Mammary epithelial cell (primary cell): ENCODE measurements at regions of chr1 and their contacts with region 1.

Region 1: GRCh38 chr1:43587594-43587993 is 56.9 kb downstream of the PTPRF start:
- DNase-seq: peak; percentile 66
- H3K4me3 ChIP-seq: no peak overlapping the region
- H3K27ac ChIP-seq: no peak overlapping the region
- H3K4me1 ChIP-seq: peaks cover 38% of the 10 kb centered on the region
- H3K27me3 ChIP-seq: no peaks in the 10 kb centered on the region
- CTCF ChIP-seq: no peak

Region 2: GRCh38 chr1:43137445-43138052 is 450.0 kb before region 1 on chr1:
- CTCF ChIA-PET with region 1: no interaction called
- dilution Hi-C with region 1: no loop called
- in situ Hi-C with region 1: no loop called
- intact Hi-C with region 1: no loop called
- DNase-seq: no peak
- H3K4me3 ChIP-seq: no peak overlapping the region
- H3K27ac ChIP-seq: no peak overlapping the region
- H3K4me1 ChIP-seq: peaks cover 23% of the 10 kb centered on the region
- H3K27me3 ChIP-seq: no peaks in the 10 kb centered on the region
- CTCF ChIP-seq: no peak

Region 3: DNA sequence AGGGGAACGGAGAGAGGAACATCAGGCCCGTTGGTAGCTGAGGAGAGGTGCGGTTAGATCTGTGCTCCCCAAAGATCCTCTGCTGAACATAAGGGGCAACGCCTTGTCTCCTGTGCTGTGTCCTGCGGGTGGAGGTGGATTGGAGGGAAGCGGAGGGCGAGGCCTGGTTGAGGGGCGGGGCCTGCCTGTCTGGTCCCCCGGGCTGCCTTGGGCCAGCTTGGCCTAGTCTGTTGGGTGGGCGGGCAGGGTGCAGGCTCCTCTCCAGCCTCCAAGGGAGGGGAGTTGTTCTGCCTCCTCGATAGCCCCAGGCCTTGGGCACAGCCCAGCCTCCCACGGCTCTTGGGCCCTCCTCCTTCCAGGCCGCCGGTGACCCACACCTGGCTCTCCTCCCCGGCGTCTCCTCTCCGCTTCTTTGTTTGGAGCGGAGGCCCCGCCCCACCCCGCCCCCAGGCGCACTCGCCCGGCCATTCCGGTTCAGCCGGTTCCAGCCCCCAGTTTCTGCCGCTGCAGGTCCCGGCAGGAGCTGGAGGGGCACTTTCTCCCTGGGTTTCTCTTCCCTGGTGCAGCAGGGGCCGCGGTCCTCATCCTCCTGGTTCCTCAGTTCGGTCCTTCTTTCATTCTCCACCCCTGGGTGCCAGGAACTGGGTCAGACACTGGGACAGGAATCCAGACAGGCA is 37.5 kb before region 1 on chr1:
- CTCF ChIA-PET with region 1: no interaction called
- dilution Hi-C with region 1: no loop called
- in situ Hi-C with region 1: no loop called
- intact Hi-C with region 1: loop called (anchors 1 kb)
- DNase-seq: peak; percentile 96
- H3K4me3 ChIP-seq: peak overlapping the region; percentile 44 to 55 (median 44)
- H3K27ac ChIP-seq: peak overlapping the region; percentile 92
- H3K4me1 ChIP-seq: peaks cover 53% of the 10 kb centered on the region
- H3K27me3 ChIP-seq: no peaks in the 10 kb centered on the region
- CTCF ChIP-seq: no peak

Region 4: DNA sequence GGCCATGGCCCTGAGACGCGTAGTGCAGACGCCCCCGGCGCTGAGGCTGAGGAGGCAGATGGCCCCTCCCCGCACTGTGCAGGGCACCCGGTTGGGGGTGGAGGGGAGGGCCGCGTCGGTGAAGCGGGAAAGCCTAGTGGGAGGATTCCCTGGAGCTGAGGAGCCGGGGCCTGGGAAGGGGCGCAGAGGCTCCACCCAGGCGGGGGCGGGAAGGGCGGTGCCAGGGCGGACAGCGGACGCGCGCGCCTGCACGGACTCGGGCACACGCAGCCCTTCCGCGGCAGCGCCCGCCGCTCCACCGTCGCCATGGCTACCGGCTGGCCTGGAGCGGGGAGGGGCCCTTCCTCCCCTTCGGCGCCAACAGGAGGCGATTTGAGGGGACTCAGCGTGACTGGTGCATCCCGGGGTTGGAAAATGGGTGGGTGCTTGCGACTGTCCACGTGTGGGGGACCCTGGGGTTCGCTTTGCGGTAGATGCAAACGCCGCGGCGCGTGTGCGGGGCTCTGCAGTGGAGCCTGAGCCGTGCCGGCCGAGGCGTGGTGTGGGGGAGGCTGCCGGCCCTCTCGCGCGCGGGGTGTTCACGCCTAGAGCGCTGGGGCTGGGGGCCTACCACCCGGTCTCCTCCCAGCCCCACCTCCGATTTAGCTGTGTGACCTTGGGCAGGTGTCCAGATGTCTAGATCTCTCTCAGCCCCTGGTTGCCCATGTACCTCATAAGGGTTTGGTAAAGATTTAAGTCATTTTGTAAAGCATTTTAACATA is 21.8 kb before region 1 on chr1:
- CTCF ChIA-PET with region 1: no interaction called
- dilution Hi-C with region 1: no loop called
- in situ Hi-C with region 1: no loop called
- intact Hi-C with region 1: loop called (anchors 2 kb)
- DNase-seq: no peak
- H3K4me3 ChIP-seq: no peak overlapping the region
- H3K27ac ChIP-seq: no peak overlapping the region
- H3K4me1 ChIP-seq: peaks cover 19% of the 10 kb centered on the region
- H3K27me3 ChIP-seq: no peaks in the 10 kb centered on the region
- CTCF ChIP-seq: no peak

Region 5: GRCh38 chr1:43622471-43622870 is 34.9 kb after region 1 on chr1:
- CTCF ChIA-PET with region 1: no interaction called
- dilution Hi-C with region 1: loop called (anchors 5 kb)
- in situ Hi-C with region 1: no loop called
- intact Hi-C with region 1: no loop called
- DNase-seq: no peak
- H3K4me3 ChIP-seq: no peak overlapping the region
- H3K27ac ChIP-seq: no peak overlapping the region
- H3K4me1 ChIP-seq: no peaks in the 10 kb centered on the region
- H3K27me3 ChIP-seq: no peaks in the 10 kb centered on the region
- CTCF ChIP-seq: no peak